ENCODE measurements at regions of chr11 and their contacts with region 1.

Region 1: DNA sequence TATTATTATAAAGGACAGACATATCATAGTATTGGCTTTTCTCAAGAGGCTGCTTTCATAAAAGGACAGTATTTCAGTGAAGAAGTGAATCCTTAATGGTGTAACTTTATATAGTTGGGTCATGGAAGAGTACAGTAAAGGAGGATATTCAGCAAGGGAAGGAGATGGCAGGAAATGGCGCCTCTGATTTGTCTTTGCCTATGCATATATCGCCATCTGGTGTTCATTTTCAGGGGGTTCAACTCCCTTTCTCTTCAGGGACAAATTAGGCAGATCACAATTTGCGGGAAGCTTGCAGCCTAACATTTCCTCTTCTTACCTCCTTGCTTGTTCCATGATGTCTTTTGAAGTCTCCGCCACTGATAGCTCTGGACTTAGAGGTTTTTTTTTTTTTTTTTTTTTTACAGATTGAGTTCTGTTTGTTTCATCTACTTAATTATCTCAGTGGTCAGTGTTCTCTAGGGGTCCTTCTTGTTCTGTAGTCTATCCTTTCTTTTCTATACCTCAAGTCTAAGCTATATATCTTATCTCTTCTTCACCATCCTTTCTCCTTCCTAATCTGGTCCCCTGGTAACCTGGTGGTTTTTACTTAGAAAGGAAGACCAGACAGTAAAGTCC is 21.8 kb upstream of the RRM1 start:
- DNase-seq: peak; percentile 21 to 70 (median 68)
- H3K4me3 ChIP-seq: no peak overlapping the region
- H3K4me3 Mint-ChIP-seq: no peak overlapping the region
- H3K27ac ChIP-seq: no peak overlapping the region
- H3K27ac Mint-ChIP-seq: peak overlapping the region; percentile 51 to 92 (median 83)
- H3K4me1 ChIP-seq: peaks cover 44% of the 10 kb centered on the region
- H3K4me1 Mint-ChIP-seq: peaks cover 42 to 63% (median 57%) of the 10 kb centered on the region in 3 donors
- H3K27me3 ChIP-seq: no peaks in the 10 kb centered on the region
- H3K27me3 Mint-ChIP-seq: no peaks in the 10 kb centered on the region

Region 2: DNA sequence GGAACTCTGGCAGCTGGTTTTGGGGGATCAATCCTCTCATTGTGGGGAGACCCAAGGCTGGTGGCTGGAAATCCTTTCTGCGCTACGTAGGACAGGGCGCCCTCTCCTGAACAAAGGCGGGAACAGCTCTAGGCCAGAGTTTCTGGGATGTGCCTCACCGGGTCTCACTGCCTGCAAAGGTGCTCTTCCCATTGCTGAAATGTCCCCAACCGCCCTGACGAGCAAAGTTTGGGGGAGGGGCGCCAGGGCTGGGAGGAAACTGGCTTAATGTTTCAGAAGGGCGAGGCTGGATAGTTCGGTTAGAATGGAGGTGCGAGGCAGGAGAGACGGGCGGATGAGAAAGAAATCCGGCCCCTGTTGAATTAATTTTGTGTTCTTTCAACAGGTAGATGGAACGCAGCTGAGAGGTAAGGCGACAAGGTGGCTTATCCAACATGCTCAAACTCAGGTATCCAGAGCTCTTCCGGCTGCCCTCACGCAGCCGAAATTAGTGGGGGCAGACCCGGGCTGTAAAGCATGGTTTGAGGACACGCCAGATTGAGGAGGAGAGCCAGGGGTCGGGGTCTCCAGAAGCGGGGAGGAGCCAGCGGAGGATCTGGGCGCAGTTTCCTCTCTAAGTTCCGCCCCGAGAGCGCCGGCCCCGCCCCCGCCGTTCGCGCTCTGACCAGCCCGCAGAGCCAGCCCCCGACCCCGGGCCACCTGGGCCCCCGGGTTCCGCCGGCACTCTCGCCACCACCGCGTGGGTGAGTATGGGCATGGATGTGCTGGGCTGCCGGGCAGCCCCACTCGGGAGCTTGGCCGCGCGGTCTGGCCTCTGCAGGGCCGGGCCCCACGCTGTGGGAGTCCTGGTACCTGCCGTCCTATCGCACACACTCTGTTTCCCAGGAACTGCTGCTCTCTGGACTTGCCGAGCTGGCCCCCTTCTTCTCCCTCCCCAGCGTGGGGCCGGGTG is 264.6 kb before region 1 on chr11 and contains the start of gene PGAP2:
- CTCF ChIA-PET with region 1: interaction called, 22 read pairs
- POLR2A ChIA-PET with region 1: no interaction called
- DNase-seq: peak; percentile 45 to 71 (median 54)
- H3K4me3 ChIP-seq: peak within 1 kb of the TSS; percentile 94
- H3K4me3 Mint-ChIP-seq: peak within 1 kb of the TSS; percentile 94 to 99 (median 97)
- H3K27ac ChIP-seq: peak within 1 kb of the TSS; percentile 66
- H3K27ac Mint-ChIP-seq: peak within 1 kb of the TSS; percentile 81 to 97 (median 94)
- H3K4me1 ChIP-seq: peaks cover 9% of the 10 kb centered on the region
- H3K4me1 Mint-ChIP-seq: peaks cover 14 to 16% (median 16%) of the 10 kb centered on the region in 3 donors
- H3K27me3 ChIP-seq: no peaks in the 10 kb centered on the region
- H3K27me3 Mint-ChIP-seq: no peaks in the 10 kb centered on the region
- total RNA-seq, gene PGAP2: 38.9 to 40.2 TPM

Region 3: DNA sequence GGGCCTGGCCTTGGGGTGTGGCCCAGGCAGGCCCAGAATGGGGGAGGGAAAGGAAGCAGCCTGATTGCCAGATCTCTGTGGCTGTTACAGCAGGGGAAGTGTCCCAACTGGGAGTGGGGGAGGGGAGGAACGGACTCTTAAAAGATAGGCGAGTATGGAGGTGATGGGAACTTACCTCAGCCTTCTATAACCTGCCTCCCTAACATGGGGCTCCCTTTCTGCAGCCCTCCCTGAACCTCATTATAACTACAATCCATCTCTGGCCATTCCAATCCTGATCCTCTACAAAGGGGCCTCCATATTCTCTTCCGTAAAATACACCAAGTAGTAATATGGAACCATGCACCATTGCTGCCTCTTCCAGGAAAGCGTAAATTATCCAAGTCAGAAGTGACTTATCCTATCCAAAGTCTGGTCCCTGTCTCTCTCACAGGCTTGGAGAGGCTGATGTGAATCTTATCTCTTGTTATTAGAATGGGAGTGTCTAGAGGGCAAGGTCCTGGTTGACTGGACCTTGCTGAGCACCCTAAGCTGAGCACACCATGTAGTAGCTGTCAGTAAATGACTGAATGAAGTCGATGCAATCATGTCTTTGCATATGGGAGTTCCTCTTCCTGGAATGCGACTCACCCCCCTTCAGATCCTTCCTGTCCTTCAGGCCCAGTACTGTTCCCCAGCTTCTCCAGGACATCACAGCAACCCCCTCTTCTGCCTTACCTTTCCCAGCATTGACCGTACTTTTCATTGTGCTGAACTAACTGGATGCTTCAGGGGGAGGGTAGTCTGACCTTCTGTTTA is 237.9 kb before region 1 on chr11:
- CTCF ChIA-PET with region 1: interaction called, 32 read pairs
- POLR2A ChIA-PET with region 1: interaction called, 3 read pairs
- DNase-seq: no peak
- H3K4me3 ChIP-seq: peak overlapping the region; percentile 29
- H3K4me3 Mint-ChIP-seq: peak overlapping the region; percentile 73 to 88 (median 75)
- H3K27ac ChIP-seq: peak overlapping the region; percentile 47
- H3K27ac Mint-ChIP-seq: peak overlapping the region; percentile 88 to 99 (median 92)
- H3K4me1 ChIP-seq: peaks cover 90% of the 10 kb centered on the region
- H3K4me1 Mint-ChIP-seq: peaks cover 91 to 98% (median 92%) of the 10 kb centered on the region in 3 donors
- H3K27me3 ChIP-seq: no peaks in the 10 kb centered on the region
- H3K27me3 Mint-ChIP-seq: peaks cover 0 to 4% of the 10 kb centered on the region in 2 donors

Region 4: DNA sequence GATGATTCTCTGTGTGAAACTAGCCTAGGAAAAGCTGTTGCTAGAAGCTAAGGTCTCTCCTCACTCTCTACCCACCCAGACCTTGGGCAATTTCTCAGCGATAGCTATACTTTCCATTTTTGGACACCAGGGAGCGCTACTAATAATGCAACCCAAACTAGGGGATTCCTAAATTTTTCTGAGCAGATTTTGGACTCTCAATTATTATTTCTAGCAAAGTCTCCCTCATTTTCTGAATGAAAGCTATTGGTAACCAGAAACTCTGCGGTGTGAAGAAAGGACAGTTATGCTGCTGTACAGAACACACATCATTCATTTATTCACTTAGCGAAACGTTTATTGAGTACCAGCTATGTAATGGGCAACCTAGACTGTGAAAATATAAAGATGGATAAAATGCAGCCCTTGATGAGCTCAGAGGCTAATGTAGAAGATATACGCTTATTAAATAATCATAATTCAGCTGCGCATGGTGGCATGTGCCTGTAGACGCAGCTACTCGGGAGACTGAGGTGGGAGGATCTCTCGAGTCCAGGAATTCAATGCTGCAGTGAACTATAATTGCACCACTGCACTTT is 223.4 kb before region 1 on chr11:
- CTCF ChIA-PET with region 1: interaction called, 407 read pairs
- POLR2A ChIA-PET with region 1: interaction called, 20 read pairs
- DNase-seq: peak in 4 of 5 donors; percentile 32 to 63 (median 52)
- H3K4me3 ChIP-seq: no peak overlapping the region
- H3K4me3 Mint-ChIP-seq: peak overlapping the region in 1 of 7 donors; percentile 58
- H3K27ac ChIP-seq: no peak overlapping the region
- H3K27ac Mint-ChIP-seq: peak overlapping the region in 6 of 8 donors; percentile 27 to 83 (median 54)
- H3K4me1 ChIP-seq: peaks cover 23% of the 10 kb centered on the region
- H3K4me1 Mint-ChIP-seq: peaks cover 26 to 28% (median 28%) of the 10 kb centered on the region in 3 donors
- H3K27me3 ChIP-seq: no peaks in the 10 kb centered on the region
- H3K27me3 Mint-ChIP-seq: peaks cover 0 to 6% of the 10 kb centered on the region in 2 donors

Region 5: DNA sequence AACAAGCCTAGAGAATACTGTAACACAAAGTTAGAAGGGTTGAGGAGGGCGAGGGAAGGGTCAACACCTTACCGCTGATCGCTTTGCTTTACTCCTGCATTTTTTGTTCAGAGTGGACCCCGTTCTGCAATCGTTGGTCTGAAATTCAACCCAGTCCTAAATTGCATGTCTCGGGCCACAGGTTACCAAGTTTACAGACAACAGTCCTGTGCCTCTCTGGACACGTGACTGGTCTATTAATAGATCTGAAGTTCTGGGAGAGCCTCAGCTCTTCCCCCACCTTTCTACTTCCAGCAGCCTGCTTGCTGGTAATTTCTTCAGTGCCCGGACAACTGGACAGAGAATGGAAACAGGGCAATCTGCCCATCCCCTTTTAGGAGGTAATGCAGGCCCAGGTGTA is 143.1 kb before region 1 on chr11:
- CTCF ChIA-PET with region 1: interaction called, 24 read pairs
- POLR2A ChIA-PET with region 1: no interaction called
- DNase-seq: no peak
- H3K4me3 ChIP-seq: no peak overlapping the region
- H3K4me3 Mint-ChIP-seq: no peak overlapping the region
- H3K27ac ChIP-seq: no peak overlapping the region
- H3K27ac Mint-ChIP-seq: peak overlapping the region in 2 of 8 donors; percentile 21 to 29
- H3K4me1 ChIP-seq: peaks cover 27% of the 10 kb centered on the region
- H3K4me1 Mint-ChIP-seq: peaks cover 43 to 81% (median 64%) of the 10 kb centered on the region in 3 donors
- H3K27me3 ChIP-seq: no peaks in the 10 kb centered on the region
- H3K27me3 Mint-ChIP-seq: no peaks in the 10 kb centered on the region

Region 6: GRCh38 chr11:4087551-4087950 is 14.8 kb after region 1 on chr11:
- CTCF ChIA-PET with region 1: interaction called, 22 read pairs
- POLR2A ChIA-PET with region 1: no interaction called
- DNase-seq: no peak
- H3K4me3 ChIP-seq: no peak overlapping the region
- H3K4me3 Mint-ChIP-seq: no peak overlapping the region
- H3K27ac ChIP-seq: no peak overlapping the region
- H3K27ac Mint-ChIP-seq: peak overlapping the region; percentile 47 to 98 (median 87)
- H3K4me1 ChIP-seq: peaks cover 35% of the 10 kb centered on the region
- H3K4me1 Mint-ChIP-seq: peaks cover 54 to 68% (median 55%) of the 10 kb centered on the region in 3 donors
- H3K27me3 ChIP-seq: no peaks in the 10 kb centered on the region
- H3K27me3 Mint-ChIP-seq: no peaks in the 10 kb centered on the region

Region 7: GRCh38 chr11:4203603-4204360 is 131.0 kb after region 1 on chr11:
- CTCF ChIA-PET with region 1: no interaction called
- POLR2A ChIA-PET with region 1: no interaction called
- DNase-seq: no peak
- H3K4me3 ChIP-seq: no peak overlapping the region
- H3K4me3 Mint-ChIP-seq: peak overlapping the region in 1 of 7 donors; percentile 68
- H3K27ac ChIP-seq: no peak overlapping the region
- H3K27ac Mint-ChIP-seq: no peak overlapping the region
- H3K4me1 ChIP-seq: no peaks in the 10 kb centered on the region
- H3K4me1 Mint-ChIP-seq: no peaks in the 10 kb centered on the region
- H3K27me3 ChIP-seq: no peaks in the 10 kb centered on the region
- H3K27me3 Mint-ChIP-seq: peaks cover 11 to 45% of the 10 kb centered on the region in 2 donors

Measured in CD8-positive, alpha-beta memory T cell (primary cell).